Mammary epithelial cell (primary cell): ENCODE measurements at regions of chr15 and their contacts with region 1.

Region 1: DNA sequence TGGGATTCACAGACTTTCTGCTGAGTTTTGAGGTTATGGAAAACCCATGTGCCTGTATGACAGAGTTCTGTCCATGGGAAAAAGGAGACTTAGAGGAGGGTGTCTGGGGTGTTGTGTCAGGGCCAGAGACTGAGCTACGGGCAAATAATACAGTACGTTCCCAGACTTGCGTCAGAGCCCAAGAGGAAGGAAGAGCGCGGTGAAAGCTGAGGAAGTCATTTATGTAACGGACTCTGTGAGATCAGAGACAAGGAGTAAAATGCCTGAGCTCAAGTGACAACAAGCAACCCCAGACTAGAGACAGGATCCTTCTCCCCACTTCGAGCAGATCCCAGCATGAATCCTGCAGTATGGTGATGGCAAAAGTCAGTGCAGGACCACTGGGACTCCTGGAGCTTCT is 368.6 kb upstream of the MCTP2 start:
- DNase-seq: no peak
- H3K4me3 ChIP-seq: no peak overlapping the region
- H3K27ac ChIP-seq: no peak overlapping the region
- H3K4me1 ChIP-seq: no peaks in the 10 kb centered on the region
- H3K27me3 ChIP-seq: no peaks in the 10 kb centered on the region
- CTCF ChIP-seq: no peak

Region 2: DNA sequence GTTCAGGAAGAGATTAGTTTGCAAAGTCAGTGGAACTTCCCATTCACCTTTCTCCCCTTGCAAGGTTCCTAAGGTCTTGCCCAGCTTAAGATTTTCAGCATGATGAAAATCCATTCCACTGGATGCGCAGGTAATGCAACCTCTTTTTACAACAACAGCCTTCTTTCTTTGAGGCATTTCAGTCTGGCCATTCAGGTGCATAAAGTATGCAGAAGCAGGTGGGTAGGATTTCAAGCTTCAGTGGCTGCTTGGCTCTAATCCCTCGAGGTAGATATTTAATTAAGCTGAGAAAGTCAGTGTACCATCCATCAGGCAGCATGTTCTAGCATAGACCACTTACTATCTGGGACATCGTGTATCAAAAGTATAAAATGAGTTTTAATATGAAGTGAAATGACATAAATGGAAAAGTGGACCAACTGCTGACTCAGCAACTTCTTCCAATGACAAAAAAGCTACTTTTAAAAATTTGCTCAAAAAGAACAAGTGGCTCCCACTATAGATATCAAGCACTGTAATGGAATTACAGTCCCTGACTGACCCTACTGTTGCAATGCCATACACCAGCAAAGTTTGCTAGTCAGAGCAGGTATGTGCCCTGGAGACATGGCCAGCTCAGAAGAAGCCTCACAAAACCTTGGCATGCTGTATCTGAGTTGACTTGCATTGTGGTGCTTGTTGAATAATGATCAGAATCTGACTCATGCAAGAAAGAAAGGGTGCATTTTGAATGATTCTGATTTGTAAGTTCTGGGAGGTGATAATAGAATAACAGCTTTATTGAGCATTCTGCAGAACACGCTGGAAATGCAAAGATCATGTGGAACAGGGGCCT is 91.4 kb before region 1 on chr15:
- CTCF ChIA-PET with region 1: no interaction called
- dilution Hi-C with region 1: no loop called
- in situ Hi-C with region 1: no loop called
- intact Hi-C with region 1: no loop called
- DNase-seq: peak; percentile 84
- H3K4me3 ChIP-seq: no peak overlapping the region
- H3K27ac ChIP-seq: no peak overlapping the region
- H3K4me1 ChIP-seq: peaks cover 24% of the 10 kb centered on the region
- H3K27me3 ChIP-seq: no peaks in the 10 kb centered on the region
- CTCF ChIP-seq: no peak

Region 3: DNA sequence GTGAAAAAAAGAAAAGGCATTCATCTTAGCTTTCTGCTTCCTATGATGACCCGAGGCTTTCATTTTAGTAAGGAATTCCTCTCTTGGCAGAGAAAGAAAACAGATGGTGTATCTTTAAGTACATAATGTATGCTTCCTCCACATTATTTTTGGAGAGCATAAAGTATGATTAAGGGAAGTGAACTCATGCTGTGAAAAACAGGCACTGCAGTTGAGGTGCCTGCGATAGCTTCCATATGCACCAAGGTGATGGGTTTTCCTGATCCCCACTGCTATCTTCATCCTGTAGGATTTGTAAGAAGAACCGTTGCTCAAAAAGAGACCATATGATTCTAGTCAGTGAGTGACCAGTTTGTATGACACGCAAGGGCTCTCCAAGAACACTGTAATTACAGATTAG is 43.0 kb before region 1 on chr15:
- CTCF ChIA-PET with region 1: no interaction called
- dilution Hi-C with region 1: no loop called
- in situ Hi-C with region 1: no loop called
- intact Hi-C with region 1: no loop called
- DNase-seq: no peak
- H3K4me3 ChIP-seq: no peak overlapping the region
- H3K27ac ChIP-seq: no peak overlapping the region
- H3K4me1 ChIP-seq: no peaks in the 10 kb centered on the region
- H3K27me3 ChIP-seq: no peaks in the 10 kb centered on the region
- CTCF ChIP-seq: no peak

Region 4: GRCh38 chr15:93881310-93881709 is 18.5 kb after region 1 on chr15:
- CTCF ChIA-PET with region 1: no interaction called
- dilution Hi-C with region 1: no loop called
- in situ Hi-C with region 1: no loop called
- intact Hi-C with region 1: loop called (anchors 1 kb)
- DNase-seq: no peak
- H3K4me3 ChIP-seq: no peak overlapping the region
- H3K27ac ChIP-seq: no peak overlapping the region
- H3K4me1 ChIP-seq: no peaks in the 10 kb centered on the region
- H3K27me3 ChIP-seq: no peaks in the 10 kb centered on the region
- CTCF ChIP-seq: no peak